ENCODE measurements at regions of chr2 and their contacts with region 1.

Region 1: GRCh38 chr2:85595301-85596025 is at the start of gene RNF181:
- DNase-seq: peak; percentile 75 to 97 (median 85)
- ATAC-seq: peak; percentile 99
- H3K4me3 ChIP-seq: peak within 1 kb of the TSS; percentile 94
- H3K4me3 Mint-ChIP-seq: peak within 1 kb of the TSS; percentile 94
- H3K27ac ChIP-seq: peak within 1 kb of the TSS; percentile 78 to 86
- H3K27ac Mint-ChIP-seq: peak within 1 kb of the TSS; percentile 98
- H3K4me1 ChIP-seq: peaks cover 41% of the 10 kb centered on the region
- H3K4me1 Mint-ChIP-seq: peaks cover 35% of the 10 kb centered on the region
- H3K27me3 ChIP-seq: no peaks in the 10 kb centered on the region
- H3K27me3 Mint-ChIP-seq: no peaks in the 10 kb centered on the region
- CTCF ChIP-seq: no peak
- total RNA-seq, gene RNF181: 41.5 to 43.8 TPM

Region 2: DNA sequence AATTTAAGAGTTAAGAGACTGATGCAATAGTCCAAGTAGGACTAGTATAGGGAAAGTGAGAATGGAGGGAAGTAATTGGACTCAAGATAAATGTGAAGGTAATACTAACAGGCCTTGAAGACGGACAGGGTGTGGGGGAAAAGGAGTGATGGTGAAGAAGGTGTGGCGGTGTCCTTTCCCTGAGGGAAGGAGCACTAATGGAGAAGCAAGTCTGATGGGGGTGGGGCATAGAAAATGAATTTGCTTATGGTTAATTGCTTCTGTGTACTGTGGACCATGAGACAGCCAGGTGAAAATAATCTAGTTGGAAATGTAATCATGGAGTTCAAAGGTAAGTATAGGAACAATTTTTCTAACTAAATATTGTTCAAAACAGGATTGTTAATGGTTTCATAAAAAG is 260.5 kb before region 1 on chr2:
- CTCF ChIA-PET with region 1: no interaction called
- POLR2A ChIA-PET with region 1: no interaction called
- intact Hi-C with region 1: no loop called
- DNase-seq: no peak
- ATAC-seq: no peak
- H3K4me3 ChIP-seq: no peak overlapping the region
- H3K4me3 Mint-ChIP-seq: no peak overlapping the region
- H3K27ac ChIP-seq: no peak overlapping the region
- H3K27ac Mint-ChIP-seq: no peak overlapping the region
- H3K4me1 ChIP-seq: no peaks in the 10 kb centered on the region
- H3K4me1 Mint-ChIP-seq: no peaks in the 10 kb centered on the region
- H3K27me3 ChIP-seq: no peaks in the 10 kb centered on the region
- H3K27me3 Mint-ChIP-seq: no peaks in the 10 kb centered on the region
- CTCF ChIP-seq: no peak

Region 3: GRCh38 chr2:85446296-85447221 is 148.9 kb before region 1 on chr2:
- CTCF ChIA-PET with region 1: no interaction called
- POLR2A ChIA-PET with region 1: no interaction called
- intact Hi-C with region 1: no loop called
- DNase-seq: no peak
- ATAC-seq: no peak
- H3K4me3 ChIP-seq: no peak overlapping the region
- H3K4me3 Mint-ChIP-seq: no peak overlapping the region
- H3K27ac ChIP-seq: no peak overlapping the region
- H3K27ac Mint-ChIP-seq: no peak overlapping the region
- H3K4me1 ChIP-seq: no peaks in the 10 kb centered on the region
- H3K4me1 Mint-ChIP-seq: no peaks in the 10 kb centered on the region
- H3K27me3 ChIP-seq: no peaks in the 10 kb centered on the region
- H3K27me3 Mint-ChIP-seq: no peaks in the 10 kb centered on the region
- CTCF ChIP-seq: no peak

Region 4: GRCh38 chr2:85470850-85471800 is 124.3 kb before region 1 on chr2:
- CTCF ChIA-PET with region 1: no interaction called
- POLR2A ChIA-PET with region 1: no interaction called
- intact Hi-C with region 1: no loop called
- DNase-seq: peak in 2 of 14 experiments; percentile 10 to 15
- ATAC-seq: no peak
- H3K4me3 ChIP-seq: no peak overlapping the region
- H3K4me3 Mint-ChIP-seq: no peak overlapping the region
- H3K27ac ChIP-seq: no peak overlapping the region
- H3K27ac Mint-ChIP-seq: no peak overlapping the region
- H3K4me1 ChIP-seq: no peaks in the 10 kb centered on the region
- H3K4me1 Mint-ChIP-seq: no peaks in the 10 kb centered on the region
- H3K27me3 ChIP-seq: no peaks in the 10 kb centered on the region
- H3K27me3 Mint-ChIP-seq: no peaks in the 10 kb centered on the region
- CTCF ChIP-seq: no peak

Region 5: DNA sequence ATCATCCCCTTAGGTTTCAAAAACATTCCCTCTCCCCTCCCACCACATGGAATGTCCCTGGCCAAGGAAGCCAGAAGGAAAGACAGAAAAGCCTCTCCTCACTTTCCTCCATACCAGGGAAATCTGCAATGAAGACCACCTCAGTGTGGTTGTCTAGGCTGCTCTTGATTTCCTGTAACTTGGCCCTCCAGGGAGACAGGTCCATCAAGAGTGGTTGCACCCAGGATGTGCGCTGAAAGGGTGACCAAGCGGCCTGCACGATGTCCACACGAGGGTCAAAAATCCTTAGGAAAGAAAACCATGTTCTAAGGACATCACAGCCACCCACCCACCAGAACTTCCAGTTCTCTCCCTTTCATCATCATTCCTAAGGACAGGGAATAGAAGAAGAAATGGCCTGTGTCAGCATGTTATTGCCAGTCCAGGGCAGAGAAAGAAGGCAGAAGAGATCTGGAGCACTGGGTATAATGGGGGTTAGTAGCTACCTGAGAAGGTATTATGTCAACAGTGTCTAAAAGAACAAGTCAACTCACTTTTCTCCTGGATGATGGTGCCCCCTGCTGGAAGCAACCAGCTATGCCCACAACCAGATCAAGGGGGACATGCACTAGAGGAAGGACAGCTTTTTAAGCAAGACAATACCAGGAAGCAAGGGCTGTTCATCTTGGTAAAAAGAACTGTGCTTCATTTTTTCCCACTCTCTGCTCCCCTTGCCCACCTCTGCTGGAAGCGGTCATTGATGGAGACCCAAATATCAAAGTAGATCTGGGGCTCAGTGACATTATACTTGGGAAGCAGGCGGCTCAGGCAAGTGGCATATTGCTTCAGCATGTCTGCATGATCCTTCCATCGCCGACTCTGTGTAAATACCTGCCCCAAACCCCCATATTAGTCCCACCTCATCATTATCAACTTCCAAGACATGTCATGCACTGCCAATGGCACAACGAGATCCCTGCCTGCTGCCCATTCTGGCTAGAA is 43.5 kb before region 1 on chr2:
- CTCF ChIA-PET with region 1: interaction called, 10 read pairs
- POLR2A ChIA-PET with region 1: interaction called, 11 read pairs
- intact Hi-C with region 1: no loop called
- DNase-seq: peak; percentile 83 to 94 (median 89)
- ATAC-seq: peak; percentile 99
- H3K4me3 ChIP-seq: no peak overlapping the region
- H3K4me3 Mint-ChIP-seq: no peak overlapping the region
- H3K27ac ChIP-seq: no peak overlapping the region
- H3K27ac Mint-ChIP-seq: peak overlapping the region; percentile 22
- H3K4me1 ChIP-seq: peaks cover 4% of the 10 kb centered on the region
- H3K4me1 Mint-ChIP-seq: peaks cover 7% of the 10 kb centered on the region
- H3K27me3 ChIP-seq: no peaks in the 10 kb centered on the region
- H3K27me3 Mint-ChIP-seq: no peaks in the 10 kb centered on the region
- CTCF ChIP-seq: peak; percentile 87

Region 6: DNA sequence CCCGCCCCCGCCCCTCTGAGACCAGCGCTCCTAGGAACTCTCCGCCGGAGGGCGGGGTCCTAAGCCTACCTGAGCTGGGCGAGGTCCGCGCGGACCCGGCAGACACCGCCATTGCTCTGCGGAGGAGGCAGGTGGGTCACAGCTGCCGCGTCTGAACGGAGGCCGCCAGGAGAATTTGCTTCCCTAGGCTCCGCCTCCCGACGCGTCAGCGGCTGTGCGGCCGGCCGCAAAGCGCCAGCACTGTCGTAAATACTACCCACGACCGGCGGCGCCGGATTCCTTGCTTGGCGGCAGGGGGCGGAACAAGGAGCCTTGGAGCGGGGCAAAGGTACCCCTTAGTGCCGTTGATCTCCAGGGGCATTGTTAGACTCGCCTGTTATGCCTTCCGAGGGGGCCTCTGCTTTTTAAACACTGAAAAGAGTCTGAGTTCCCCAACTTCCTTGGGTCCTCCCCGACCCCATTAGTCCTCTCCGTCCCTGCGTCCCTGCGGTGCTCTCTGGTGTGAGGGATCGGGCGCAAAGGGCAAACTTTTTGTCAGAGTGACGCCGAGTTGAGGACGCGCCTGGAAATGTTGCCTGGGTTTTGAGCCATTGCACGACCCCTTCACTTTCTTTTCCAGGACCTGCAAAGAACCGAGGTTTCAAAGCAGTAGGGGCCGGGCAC is 34.0 kb before region 1 on chr2 and contains the start of gene GGCX:
- CTCF ChIA-PET with region 1: no interaction called
- POLR2A ChIA-PET with region 1: interaction called, 19 read pairs
- intact Hi-C with region 1: loop called (anchors 2 to 5 kb)
- DNase-seq: peak; percentile 88 to 97 (median 93)
- ATAC-seq: peak; percentile 89
- H3K4me3 ChIP-seq: peak within 1 kb of the TSS; percentile 81
- H3K4me3 Mint-ChIP-seq: peak within 1 kb of the TSS; percentile 99
- H3K27ac ChIP-seq: peak within 1 kb of the TSS; percentile 67 to 68
- H3K27ac Mint-ChIP-seq: peak within 1 kb of the TSS; percentile 95
- H3K4me1 ChIP-seq: peaks cover 20% of the 10 kb centered on the region
- H3K4me1 Mint-ChIP-seq: peaks cover 30% of the 10 kb centered on the region
- H3K27me3 ChIP-seq: no peaks in the 10 kb centered on the region
- H3K27me3 Mint-ChIP-seq: no peaks in the 10 kb centered on the region
- CTCF ChIP-seq: no peak
- total RNA-seq, gene GGCX: 22.9 to 27.6 TPM

Region 7: DNA sequence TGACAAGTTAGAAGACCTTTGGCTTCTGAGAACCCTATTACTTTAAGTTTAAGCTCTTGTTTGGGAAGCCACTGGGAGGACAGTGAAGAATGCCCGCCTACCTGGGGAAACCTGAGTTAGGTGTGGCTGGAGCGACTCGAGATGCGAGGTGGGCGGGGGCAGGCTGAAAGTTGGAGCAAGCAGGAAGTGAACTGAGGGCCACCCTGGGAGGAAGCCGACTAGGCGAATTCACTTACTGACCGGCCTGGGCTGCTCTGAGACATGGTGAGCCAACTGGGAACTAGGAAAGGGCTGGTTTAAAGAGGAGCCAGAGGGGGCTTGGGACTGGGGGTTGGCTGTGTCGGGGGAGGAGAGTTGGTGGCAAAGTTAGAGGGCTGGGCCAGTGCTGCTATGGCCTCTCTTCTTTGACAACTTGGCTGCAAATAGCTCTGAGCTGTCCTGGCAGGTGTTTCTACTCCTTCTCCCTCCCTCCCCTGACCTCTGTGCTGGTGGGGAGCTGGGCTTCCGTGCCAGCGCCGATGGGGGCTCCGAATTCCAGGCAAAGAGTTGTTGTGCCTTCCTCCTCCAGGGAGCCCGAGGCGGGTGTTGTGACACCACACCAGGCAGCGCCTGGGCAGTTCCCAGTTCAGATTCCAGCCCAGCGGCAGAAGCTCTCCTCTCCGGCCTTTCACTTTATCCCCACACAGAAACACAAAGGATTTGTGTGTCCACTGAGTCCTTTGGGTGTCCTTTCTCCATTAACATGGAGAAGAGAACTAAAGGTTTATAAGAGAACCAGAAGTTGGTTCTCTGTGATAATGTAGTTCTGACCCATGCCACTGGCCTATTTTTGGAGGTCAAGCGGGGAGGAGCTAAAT is 17.8 kb before region 1 on chr2 and contains the start of gene VAMP8:
- CTCF ChIA-PET with region 1: no interaction called
- POLR2A ChIA-PET with region 1: interaction called, 14 read pairs
- intact Hi-C with region 1: no loop called
- DNase-seq: peak in 13 of 14 experiments; percentile 37 to 82 (median 59)
- ATAC-seq: peak; percentile 81
- H3K4me3 ChIP-seq: peak within 1 kb of the TSS; percentile 84
- H3K4me3 Mint-ChIP-seq: peak within 1 kb of the TSS; percentile 93
- H3K27ac ChIP-seq: peak within 1 kb of the TSS; percentile 47 to 63
- H3K27ac Mint-ChIP-seq: peak within 1 kb of the TSS; percentile 94
- H3K4me1 ChIP-seq: peaks cover 41% of the 10 kb centered on the region
- H3K4me1 Mint-ChIP-seq: peaks cover 44% of the 10 kb centered on the region
- H3K27me3 ChIP-seq: no peaks in the 10 kb centered on the region
- H3K27me3 Mint-ChIP-seq: no peaks in the 10 kb centered on the region
- CTCF ChIP-seq: no peak
- total RNA-seq, gene VAMP8: 32.3 to 37.3 TPM

Region 8: GRCh38 chr2:85584857-85585783 is 10.3 kb before region 1 on chr2:
- CTCF ChIA-PET with region 1: no interaction called
- POLR2A ChIA-PET with region 1: interaction called, 60 read pairs
- intact Hi-C with region 1: no loop called
- DNase-seq: peak in 3 of 14 experiments; percentile 8 to 39 (median 38)
- ATAC-seq: peak; percentile 48
- H3K4me3 ChIP-seq: peak overlapping the region; percentile 77
- H3K4me3 Mint-ChIP-seq: peak overlapping the region; percentile 93
- H3K27ac ChIP-seq: peak overlapping the region; percentile 26 to 68
- H3K27ac Mint-ChIP-seq: peak overlapping the region; percentile 79
- H3K4me1 ChIP-seq: peaks cover 49% of the 10 kb centered on the region
- H3K4me1 Mint-ChIP-seq: peaks cover 57% of the 10 kb centered on the region
- H3K27me3 ChIP-seq: no peaks in the 10 kb centered on the region
- H3K27me3 Mint-ChIP-seq: no peaks in the 10 kb centered on the region
- CTCF ChIP-seq: no peak

Region 9: GRCh38 chr2:85611705-85612587 is 16.5 kb after region 1 on chr2 and contains the start of gene C2orf68:
- CTCF ChIA-PET with region 1: interaction called, 4 read pairs
- POLR2A ChIA-PET with region 1: interaction called, 24 read pairs
- intact Hi-C with region 1: loop called in 1 of 2 experiments (anchors 2 kb)
- DNase-seq: peak; percentile 59 to 88 (median 79)
- ATAC-seq: peak; percentile 52
- H3K4me3 ChIP-seq: peak within 1 kb of the TSS; percentile 58
- H3K4me3 Mint-ChIP-seq: peak within 1 kb of the TSS; percentile 95
- H3K27ac ChIP-seq: peak within 1 kb of the TSS; percentile 74 to 82
- H3K27ac Mint-ChIP-seq: peak within 1 kb of the TSS; percentile 86
- H3K4me1 ChIP-seq: peaks cover 40% of the 10 kb centered on the region
- H3K4me1 Mint-ChIP-seq: peaks cover 39% of the 10 kb centered on the region
- H3K27me3 ChIP-seq: no peaks in the 10 kb centered on the region
- H3K27me3 Mint-ChIP-seq: no peaks in the 10 kb centered on the region
- CTCF ChIP-seq: no peak
- total RNA-seq, gene C2orf68: 31.0 to 31.2 TPM

Region 10: GRCh38 chr2:86017901-86018896 is 422.7 kb after region 1 on chr2:
- CTCF ChIA-PET with region 1: no interaction called
- POLR2A ChIA-PET with region 1: no interaction called
- intact Hi-C with region 1: no loop called
- DNase-seq: peak in 2 of 14 experiments; percentile 29 to 48
- ATAC-seq: no peak
- H3K4me3 ChIP-seq: no peak overlapping the region
- H3K4me3 Mint-ChIP-seq: no peak overlapping the region
- H3K27ac ChIP-seq: no peak overlapping the region
- H3K27ac Mint-ChIP-seq: peak overlapping the region; percentile 51
- H3K4me1 ChIP-seq: peaks cover 20% of the 10 kb centered on the region
- H3K4me1 Mint-ChIP-seq: peaks cover 16% of the 10 kb centered on the region
- H3K27me3 ChIP-seq: no peaks in the 10 kb centered on the region
- H3K27me3 Mint-ChIP-seq: no peaks in the 10 kb centered on the region
- CTCF ChIP-seq: no peak

Measured in CD4-positive, alpha-beta T cell (primary cell).